ENCODE measurements at regions of chr9 and their contacts with region 1.

Region 1: GRCh38 chr9:124098141-124099090 is 86.8 kb downstream of the LHX2 start:
- DNase-seq: no peak
- H3K4me3 ChIP-seq: no peak overlapping the region
- H3K27ac ChIP-seq: no peak overlapping the region
- H3K4me1 ChIP-seq: no peaks in the 10 kb centered on the region
- H3K27me3 ChIP-seq: peaks cover 0 to 10% of the 10 kb centered on the region in 2 donors
- CTCF ChIP-seq: no peak
- POLR2A ChIP-seq: no peak

Region 2: GRCh38 chr9:124066783-124067563 is 31.4 kb before region 1 on chr9:
- intact Hi-C with region 1: loop called (anchors 1 kb)
- DNase-seq: no peak
- H3K4me3 ChIP-seq: no peak overlapping the region
- H3K27ac ChIP-seq: no peak overlapping the region
- H3K4me1 ChIP-seq: no peaks in the 10 kb centered on the region
- H3K27me3 ChIP-seq: no peaks in the 10 kb centered on the region
- CTCF ChIP-seq: no peak
- POLR2A ChIP-seq: no peak

Measured in breast epithelium (tissue), 4 donors.